IMR-90 (cell line): ENCODE measurements at regions of chr2 and their contacts with region 1.

Region 1: DNA sequence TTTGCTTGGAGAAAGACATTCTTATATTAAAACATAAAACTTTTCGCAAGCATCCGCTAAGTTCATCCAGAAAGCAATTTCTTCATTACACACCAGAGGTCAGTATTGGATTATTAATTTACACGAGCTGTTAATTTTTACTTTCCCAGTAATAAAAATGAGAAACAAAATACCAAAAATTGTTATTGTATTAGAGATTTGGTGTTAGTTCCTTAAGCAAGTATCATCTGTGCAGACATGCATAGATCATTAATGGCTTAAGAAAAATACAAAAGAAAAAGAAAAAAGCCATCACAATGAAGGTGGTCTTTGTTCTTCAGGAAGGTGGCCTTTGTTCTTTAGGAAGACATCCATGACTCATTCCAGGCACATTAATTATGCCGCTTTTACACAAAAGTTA is 53.6 kb upstream of the HNMT start:
- DNase-seq: peak; percentile 20
- ATAC-seq: peak; percentile 42; the same call in 1 of the 2 replicates
- H3K4me3 ChIP-seq: no peak overlapping the region
- H3K27ac ChIP-seq: no peak overlapping the region
- H3K4me1 ChIP-seq: no peaks in the 10 kb centered on the region
- H3K27me3 ChIP-seq: 0 out of 2 replicates have a peak, but pooled peaks cover 2% of the 10 kb centered on the region
- CTCF ChIP-seq: peak; percentile 74
- POLR2A ChIP-seq: no peak
- RAD21 ChIP-seq: peak; percentile 74

Region 2: GRCh38 chr2:137357634-137358033 is 553.0 kb before region 1 on chr2:
- CTCF ChIA-PET with region 1: no interaction called
- POLR2A ChIA-PET with region 1: no interaction called
- dilution Hi-C with region 1: no loop called
- in situ Hi-C with region 1: no loop called
- intact Hi-C with region 1: no loop called
- DNase-seq: no peak
- ATAC-seq: no peak
- H3K4me3 ChIP-seq: no peak overlapping the region
- H3K27ac ChIP-seq: no peak overlapping the region
- H3K4me1 ChIP-seq: no peaks in the 10 kb centered on the region
- H3K27me3 ChIP-seq: no peaks in the 10 kb centered on the region
- CTCF ChIP-seq: no peak
- POLR2A ChIP-seq: no peak
- RAD21 ChIP-seq: no peak

Region 3: DNA sequence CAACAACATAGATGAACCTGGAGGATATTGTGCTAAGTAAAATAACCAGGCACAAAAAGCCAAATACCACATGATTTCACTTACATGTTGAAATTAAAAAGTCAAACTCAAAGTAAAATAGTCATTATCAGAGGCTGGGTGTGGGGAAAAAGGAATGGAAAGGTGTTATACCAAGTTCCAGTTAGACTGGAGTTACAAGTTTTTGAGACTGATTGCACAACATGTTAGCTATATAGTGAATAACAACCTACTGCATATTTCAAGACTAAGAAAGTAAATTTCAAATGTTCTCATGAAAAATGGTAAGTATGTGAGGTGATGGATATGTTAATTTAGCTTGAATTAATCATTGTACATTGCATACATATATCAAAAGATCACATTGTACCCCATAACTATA is 63.2 kb before region 1 on chr2:
- CTCF ChIA-PET with region 1: no interaction called
- POLR2A ChIA-PET with region 1: no interaction called
- dilution Hi-C with region 1: no loop called
- in situ Hi-C with region 1: no loop called
- intact Hi-C with region 1: no loop called
- DNase-seq: no peak
- ATAC-seq: no peak
- H3K4me3 ChIP-seq: no peak overlapping the region
- H3K27ac ChIP-seq: no peak overlapping the region
- H3K4me1 ChIP-seq: no peaks in the 10 kb centered on the region
- H3K27me3 ChIP-seq: no peaks in the 10 kb centered on the region
- CTCF ChIP-seq: no peak
- POLR2A ChIP-seq: no peak
- RAD21 ChIP-seq: no peak

Region 4: GRCh38 chr2:138010890-138011289 is 100.2 kb after region 1 on chr2:
- CTCF ChIA-PET with region 1: no interaction called
- POLR2A ChIA-PET with region 1: no interaction called
- dilution Hi-C with region 1: no loop called
- in situ Hi-C with region 1: no loop called
- intact Hi-C with region 1: no loop called
- DNase-seq: no peak
- ATAC-seq: no peak
- H3K4me3 ChIP-seq: no peak overlapping the region
- H3K27ac ChIP-seq: no peak overlapping the region
- H3K4me1 ChIP-seq: no peaks in the 10 kb centered on the region
- H3K27me3 ChIP-seq: no peaks in the 10 kb centered on the region
- CTCF ChIP-seq: no peak
- POLR2A ChIP-seq: no peak
- RAD21 ChIP-seq: no peak

Region 5: GRCh38 chr2:138090330-138090729 is 179.7 kb after region 1 on chr2:
- CTCF ChIA-PET with region 1: interaction called, 5 read pairs
- POLR2A ChIA-PET with region 1: no interaction called
- dilution Hi-C with region 1: no loop called
- in situ Hi-C with region 1: loop called (anchors 10 kb)
- intact Hi-C with region 1: loop called (anchors 1 kb)
- DNase-seq: peak; percentile 58
- ATAC-seq: peak; percentile 74
- H3K4me3 ChIP-seq: no peak overlapping the region
- H3K27ac ChIP-seq: no peak overlapping the region
- H3K4me1 ChIP-seq: no peaks in the 10 kb centered on the region
- H3K27me3 ChIP-seq: peaks cover 4% of the 10 kb centered on the region
- CTCF ChIP-seq: peak; percentile 91
- POLR2A ChIP-seq: no peak; the same call in 1 of the 2 replicates
- RAD21 ChIP-seq: peak; percentile 89

Region 6: GRCh38 chr2:138373993-138374408 is 463.4 kb after region 1 on chr2:
- CTCF ChIA-PET with region 1: no interaction called
- POLR2A ChIA-PET with region 1: no interaction called
- dilution Hi-C with region 1: no loop called
- in situ Hi-C with region 1: loop called (anchors 10 kb)
- intact Hi-C with region 1: loop called (anchors 1 kb)
- DNase-seq: peak; percentile 52
- ATAC-seq: peak; percentile 73
- H3K4me3 ChIP-seq: no peak overlapping the region
- H3K27ac ChIP-seq: no peak overlapping the region
- H3K4me1 ChIP-seq: no peaks in the 10 kb centered on the region
- H3K27me3 ChIP-seq: no peaks in the 10 kb centered on the region
- CTCF ChIP-seq: peak; percentile 70
- POLR2A ChIP-seq: no peak
- RAD21 ChIP-seq: peak; percentile 72

Region 7: GRCh38 chr2:138501425-138502283 is 591.0 kb after region 1 on chr2 and contains the start of gene SPOPL:
- CTCF ChIA-PET with region 1: no interaction called
- POLR2A ChIA-PET with region 1: no interaction called
- dilution Hi-C with region 1: no loop called
- in situ Hi-C with region 1: no loop called
- intact Hi-C with region 1: loop called (anchors 10 kb)
- DNase-seq: peak; percentile 74
- ATAC-seq: peak; percentile 96
- H3K4me3 ChIP-seq: peak within 1 kb of the TSS; percentile 97
- H3K27ac ChIP-seq: peak within 1 kb of the TSS; percentile 89
- H3K4me1 ChIP-seq: no peaks in the 10 kb centered on the region
- H3K27me3 ChIP-seq: no peaks in the 10 kb centered on the region
- CTCF ChIP-seq: no peak
- POLR2A ChIP-seq: peak; percentile 77
- RAD21 ChIP-seq: no peak
- total RNA-seq, gene SPOPL: 16.7 and 20.3 TPM in 2 replicates

Region 8: DNA sequence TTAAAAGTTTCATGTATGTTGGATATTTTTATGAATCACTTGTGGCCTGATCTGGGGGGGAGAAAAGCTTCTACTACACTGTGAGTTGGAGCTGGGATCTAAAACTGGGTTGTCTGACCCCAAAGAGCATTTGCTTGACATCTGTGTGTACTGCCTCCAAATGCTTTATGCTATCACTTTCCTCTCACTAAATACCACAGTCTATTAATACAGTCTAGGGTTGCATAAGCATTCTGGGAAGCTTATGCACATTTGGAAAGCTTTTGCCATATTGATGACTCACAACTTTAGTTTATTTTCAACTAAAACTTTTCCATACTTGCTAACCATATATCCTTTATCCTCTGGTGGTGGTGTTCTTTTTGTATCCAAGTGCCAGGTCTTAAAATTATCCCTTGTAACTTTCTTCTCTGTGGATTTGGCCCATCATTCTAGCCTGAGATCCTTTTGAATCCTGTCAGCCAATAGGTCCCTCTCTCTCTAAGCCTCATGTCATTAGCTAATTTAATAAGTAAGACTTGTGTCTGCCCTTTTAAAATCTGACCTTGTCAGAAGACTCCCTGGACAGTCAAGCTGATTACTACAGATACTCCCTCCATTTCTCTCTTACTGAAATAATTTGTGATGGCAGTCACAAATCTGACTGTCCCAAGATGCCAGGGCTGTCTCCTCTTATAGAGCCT is 796.9 kb after region 1 on chr2:
- CTCF ChIA-PET with region 1: no interaction called
- POLR2A ChIA-PET with region 1: no interaction called
- dilution Hi-C with region 1: no loop called
- in situ Hi-C with region 1: no loop called
- intact Hi-C with region 1: loop called (anchors 10 kb)
- DNase-seq: peak; percentile 90
- ATAC-seq: peak; percentile 90
- H3K4me3 ChIP-seq: no peak overlapping the region
- H3K27ac ChIP-seq: peak overlapping the region; percentile 40; the same call in 1 of the 2 replicates
- H3K4me1 ChIP-seq: peaks cover 8% of the 10 kb centered on the region; the same call in 1 of the 2 replicates
- H3K27me3 ChIP-seq: no peaks in the 10 kb centered on the region; the same call in 1 of the 2 replicates
- CTCF ChIP-seq: no peak
- POLR2A ChIP-seq: no peak
- RAD21 ChIP-seq: no peak

Region 9: GRCh38 chr2:138787053-138787666 is 876.5 kb after region 1 on chr2:
- CTCF ChIA-PET with region 1: interaction called, 3 read pairs
- POLR2A ChIA-PET with region 1: interaction called, 4 read pairs
- dilution Hi-C with region 1: no loop called
- in situ Hi-C with region 1: loop called (anchors 25 kb)
- intact Hi-C with region 1: loop called (anchors 1 kb)
- DNase-seq: peak; percentile 37
- ATAC-seq: peak; percentile 44; the same call in 1 of the 2 replicates
- H3K4me3 ChIP-seq: no peak overlapping the region
- H3K27ac ChIP-seq: no peak overlapping the region
- H3K4me1 ChIP-seq: no peaks in the 10 kb centered on the region
- H3K27me3 ChIP-seq: peaks cover 2% of the 10 kb centered on the region; the same call in 1 of the 2 replicates
- CTCF ChIP-seq: peak; percentile 68
- POLR2A ChIP-seq: no peak
- RAD21 ChIP-seq: peak; percentile 64

Region 10: GRCh38 chr2:138827426-138828054 is 916.9 kb after region 1 on chr2:
- CTCF ChIA-PET with region 1: interaction called, 6 read pairs
- POLR2A ChIA-PET with region 1: no interaction called
- dilution Hi-C with region 1: no loop called
- in situ Hi-C with region 1: no loop called
- intact Hi-C with region 1: loop called (anchors 1 kb)
- DNase-seq: peak; percentile 68
- ATAC-seq: peak; percentile 94
- H3K4me3 ChIP-seq: no peak overlapping the region
- H3K27ac ChIP-seq: no peak overlapping the region
- H3K4me1 ChIP-seq: no peaks in the 10 kb centered on the region
- H3K27me3 ChIP-seq: no peaks in the 10 kb centered on the region
- CTCF ChIP-seq: peak; percentile 72
- POLR2A ChIP-seq: no peak
- RAD21 ChIP-seq: peak; percentile 70